ENCODE measurements at regions of chr1 and their contacts with region 1.

Region 1: GRCh38 chr1:156689035-156689952 is 12.1 kb upstream of the NES start:
- DNase-seq: peak; percentile 80
- H3K4me3 Mint-ChIP-seq: no peak overlapping the region
- H3K27ac Mint-ChIP-seq: no peak overlapping the region
- H3K4me1 Mint-ChIP-seq: peaks cover 28% of the 10 kb centered on the region
- H3K27me3 Mint-ChIP-seq: peaks cover 46% of the 10 kb centered on the region

Region 2: GRCh38 chr1:156677616-156678596 is 11.4 kb before region 1 on chr1:
- CTCF ChIA-PET with region 1: interaction called, 34 read pairs
- intact Hi-C with region 1: no loop called
- DNase-seq: peak; percentile 49
- H3K4me3 Mint-ChIP-seq: no peak overlapping the region
- H3K27ac Mint-ChIP-seq: no peak overlapping the region
- H3K4me1 Mint-ChIP-seq: peaks cover 14% of the 10 kb centered on the region
- H3K27me3 Mint-ChIP-seq: peaks cover 50% of the 10 kb centered on the region

Region 3: DNA sequence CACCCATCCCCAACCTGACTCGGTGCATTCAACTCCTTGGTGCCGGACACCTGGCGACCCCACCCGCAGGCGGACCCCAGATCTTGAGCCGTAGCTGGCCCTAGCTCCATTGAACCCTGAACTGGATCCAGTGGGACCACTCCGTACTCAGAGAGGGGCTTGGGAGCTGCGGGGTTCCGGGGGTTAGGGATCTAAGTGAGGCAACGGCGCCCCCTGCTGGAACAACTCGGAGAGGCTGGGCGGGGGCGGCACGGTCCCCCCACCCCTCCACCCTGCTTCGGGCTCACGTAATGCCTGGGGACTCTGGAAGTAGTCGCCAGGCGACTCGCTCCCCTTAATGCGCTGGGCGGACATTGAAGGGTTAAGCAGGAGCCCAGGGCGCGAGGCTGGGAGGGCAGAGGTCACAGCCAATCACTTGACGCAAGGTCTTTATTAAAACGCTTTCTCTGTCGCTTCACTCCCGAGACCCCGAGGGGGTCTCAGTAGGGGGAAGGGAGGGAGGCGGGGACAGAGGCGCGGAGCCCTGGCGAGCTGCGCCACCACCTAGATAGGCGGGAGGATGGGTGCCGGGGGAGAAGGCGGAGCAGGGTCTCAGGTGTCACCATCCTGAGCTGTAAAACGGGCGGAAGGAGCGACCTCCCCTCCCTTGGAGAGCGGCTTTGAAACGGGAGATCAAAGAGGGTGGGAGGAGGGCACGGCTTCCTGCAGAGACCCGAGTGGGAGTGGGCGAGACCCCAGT is 16.8 kb after region 1 on chr1:
- CTCF ChIA-PET with region 1: interaction called, 183 read pairs
- intact Hi-C with region 1: loop called (anchors 1 kb)
- DNase-seq: peak; percentile 77
- H3K4me3 Mint-ChIP-seq: peak overlapping the region; percentile 76
- H3K27ac Mint-ChIP-seq: peak overlapping the region; percentile 46
- H3K4me1 Mint-ChIP-seq: peaks cover 27% of the 10 kb centered on the region
- H3K27me3 Mint-ChIP-seq: peaks cover 25% of the 10 kb centered on the region

Region 4: GRCh38 chr1:156717275-156717805 is 28.0 kb after region 1 on chr1:
- CTCF ChIA-PET with region 1: interaction called, 53 read pairs
- intact Hi-C with region 1: no loop called
- DNase-seq: no peak
- H3K4me3 Mint-ChIP-seq: no peak overlapping the region
- H3K27ac Mint-ChIP-seq: no peak overlapping the region
- H3K4me1 Mint-ChIP-seq: peaks cover 6% of the 10 kb centered on the region
- H3K27me3 Mint-ChIP-seq: no peaks in the 10 kb centered on the region

Region 5: DNA sequence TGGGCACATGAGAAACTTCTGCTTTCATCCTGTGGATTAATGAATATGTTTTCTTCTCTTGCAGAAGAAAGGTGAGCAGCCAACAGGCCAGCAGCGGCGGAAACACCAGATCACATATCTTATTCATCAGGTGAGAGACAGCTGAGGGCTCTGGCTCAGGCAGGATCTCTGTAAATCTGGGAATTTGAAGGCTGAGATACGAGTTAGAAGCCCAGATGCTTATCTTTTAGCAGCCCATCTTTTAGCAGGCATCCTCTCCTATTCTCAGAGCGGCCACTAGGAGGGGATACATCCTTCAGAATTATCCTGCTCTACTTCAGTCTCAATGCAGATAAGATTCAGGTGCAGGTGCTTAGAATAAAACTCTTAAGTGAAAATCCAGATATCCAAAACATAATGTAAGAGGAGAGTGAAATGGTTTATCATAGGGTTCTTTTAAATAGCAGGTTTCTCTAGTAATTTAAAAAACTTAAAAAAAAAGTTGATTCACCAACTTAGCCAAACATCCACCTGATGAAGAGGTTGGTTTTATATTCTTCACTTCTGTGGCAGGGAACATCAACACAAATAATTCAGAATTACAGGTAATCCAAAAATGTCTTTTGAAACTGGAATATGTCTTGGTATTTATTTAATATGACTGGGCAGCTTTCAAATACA is 108.0 kb after region 1 on chr1:
- CTCF ChIA-PET with region 1: interaction called, 27 read pairs
- intact Hi-C with region 1: no loop called
- DNase-seq: peak; percentile 78
- H3K4me3 Mint-ChIP-seq: no peak overlapping the region
- H3K27ac Mint-ChIP-seq: no peak overlapping the region
- H3K4me1 Mint-ChIP-seq: no peaks in the 10 kb centered on the region
- H3K27me3 Mint-ChIP-seq: no peaks in the 10 kb centered on the region

Region 6: DNA sequence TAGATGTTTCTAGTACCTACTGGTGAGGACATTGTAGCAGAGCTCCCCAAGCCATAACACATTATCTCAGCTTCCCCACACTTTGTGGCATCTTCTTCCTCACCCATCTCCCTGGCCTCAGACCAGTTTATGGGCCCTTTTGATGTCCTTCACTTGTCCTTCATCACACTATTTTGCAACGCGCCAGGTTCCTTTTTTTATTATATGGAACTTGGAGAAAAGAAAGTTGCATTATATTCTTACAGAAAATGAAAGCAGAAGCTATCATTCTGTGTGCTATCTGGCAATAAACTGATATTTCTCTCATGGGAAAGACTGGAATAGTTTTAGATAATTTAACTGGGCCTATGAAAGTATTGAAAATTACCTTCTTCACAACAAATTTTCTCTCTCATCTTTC is 645.8 kb after region 1 on chr1:
- CTCF ChIA-PET with region 1: no interaction called
- intact Hi-C with region 1: no loop called
- DNase-seq: no peak
- H3K4me3 Mint-ChIP-seq: no peak overlapping the region
- H3K27ac Mint-ChIP-seq: no peak overlapping the region
- H3K4me1 Mint-ChIP-seq: no peaks in the 10 kb centered on the region
- H3K27me3 Mint-ChIP-seq: peaks cover 27% of the 10 kb centered on the region

Measured in activated naive CD4-positive, alpha-beta T cell treated with anti-CD3 and anti-CD28 coated beads for 36 hours (primary cell).